GM12878 (cell line): ENCODE measurements at regions of chr3 and their contacts with region 1.

Region 1: GRCh38 chr3:270688-271087 is 74.1 kb downstream of the CHL1 start:
- DNase-seq: no peak
- ATAC-seq: peak; percentile 72
- H3K4me3 ChIP-seq: no peak overlapping the region
- H3K27ac ChIP-seq: no peak overlapping the region
- H3K4me1 ChIP-seq: no peaks in the 10 kb centered on the region
- H3K27me3 ChIP-seq: no peaks in the 10 kb centered on the region
- CTCF ChIP-seq: no peak
- EP300 ChIP-seq: no peak
- POLR2A ChIP-seq: no peak
- RAD21 ChIP-seq: no peak

Region 2: GRCh38 chr3:248864-249520 is 21.7 kb before region 1 on chr3:
- CTCF ChIA-PET with region 1: interaction called, 10 read pairs
- POLR2A ChIA-PET with region 1: interaction called, 4 read pairs
- RAD21 ChIA-PET with region 1: interaction called, 3 read pairs
- SMC1A ChIA-PET with region 1: interaction called, 10 read pairs
- in situ Hi-C with region 1: no loop called
- intact Hi-C with region 1: no loop called
- DNase-seq: no peak
- ATAC-seq: no peak; the same call in 2 of the 3 replicates
- H3K4me3 ChIP-seq: no peak overlapping the region
- H3K27ac ChIP-seq: no peak overlapping the region
- H3K4me1 ChIP-seq: no peaks in the 10 kb centered on the region
- H3K27me3 ChIP-seq: no peaks in the 10 kb centered on the region
- CTCF ChIP-seq: no peak
- EP300 ChIP-seq: no peak
- POLR2A ChIP-seq: no peak
- RAD21 ChIP-seq: no peak

Region 3: DNA sequence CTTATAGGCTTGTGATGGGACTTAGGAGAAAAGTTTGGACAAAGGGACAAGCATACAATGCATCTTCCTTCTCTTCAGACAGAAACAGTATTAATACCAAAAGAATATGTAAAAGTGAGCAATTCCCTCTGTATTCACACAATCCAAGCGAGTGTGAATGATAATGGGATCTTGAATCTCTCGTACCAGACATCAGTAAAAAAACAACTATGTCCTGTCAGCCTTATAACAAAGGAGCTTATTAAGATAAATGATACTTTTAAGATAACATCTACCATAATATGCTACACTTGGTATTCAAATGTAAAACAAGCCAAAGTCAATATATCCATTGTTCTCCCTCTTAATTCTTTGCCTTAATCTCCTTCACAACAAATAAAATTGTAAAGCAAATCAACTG is 533.5 kb after region 1 on chr3:
- CTCF ChIA-PET with region 1: no interaction called
- POLR2A ChIA-PET with region 1: no interaction called
- RAD21 ChIA-PET with region 1: no interaction called
- SMC1A ChIA-PET with region 1: no interaction called
- in situ Hi-C with region 1: no loop called
- intact Hi-C with region 1: no loop called
- DNase-seq: no peak
- ATAC-seq: no peak
- H3K4me3 ChIP-seq: no peak overlapping the region
- H3K27ac ChIP-seq: no peak overlapping the region
- H3K4me1 ChIP-seq: no peaks in the 10 kb centered on the region
- H3K27me3 ChIP-seq: no peaks in the 10 kb centered on the region
- CTCF ChIP-seq: no peak
- EP300 ChIP-seq: no peak
- POLR2A ChIP-seq: no peak
- RAD21 ChIP-seq: no peak